ENCODE measurements at regions of chr13 and their contacts with region 1.

Region 1: DNA sequence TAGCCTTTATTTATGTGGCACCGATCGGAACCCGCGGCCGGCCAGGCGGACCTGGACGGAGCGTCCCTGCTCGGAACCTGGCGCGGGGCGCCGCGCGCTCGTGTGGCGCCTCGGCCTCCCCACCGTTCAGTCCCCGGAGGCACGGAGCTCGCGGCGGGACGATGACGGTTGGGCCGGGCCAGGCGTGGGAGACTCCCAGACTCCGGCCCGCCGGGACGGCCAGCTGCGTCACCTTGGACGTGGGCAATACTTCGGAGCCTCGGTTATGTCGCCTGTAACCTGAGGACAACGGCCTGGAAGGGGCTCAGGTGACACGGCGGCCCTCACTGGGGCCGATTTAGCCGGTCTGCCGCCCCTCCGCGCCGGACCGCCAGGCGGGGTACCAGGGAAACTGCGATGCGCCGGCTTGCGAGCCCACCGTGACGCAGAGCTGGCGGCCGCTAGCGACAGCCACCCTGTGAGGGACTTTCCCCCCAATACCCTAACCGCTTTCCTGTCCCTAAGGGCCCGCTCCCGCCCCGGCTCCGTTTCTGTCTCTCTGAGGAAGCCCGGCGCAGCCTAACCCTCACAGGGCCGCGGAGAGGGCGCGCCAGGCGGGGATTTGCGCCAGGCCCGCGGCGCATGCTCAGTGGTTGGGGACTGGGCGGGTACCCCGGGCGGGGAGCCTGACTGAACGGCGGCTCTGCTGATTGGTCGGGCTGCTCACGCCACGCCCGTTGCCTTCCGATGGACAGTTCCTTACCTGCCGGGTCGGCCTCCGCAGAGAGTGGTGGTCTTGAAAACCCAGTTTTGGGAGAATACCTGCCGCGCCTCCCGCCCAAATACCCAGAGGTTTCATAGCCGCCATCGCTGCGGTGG is 109.5 kb upstream of the DOCK9 start:
- DNase-seq: peak; percentile 96
- ATAC-seq: peak; percentile 86
- H3K4me3 Mint-ChIP-seq: peak overlapping the region; percentile 94
- H3K27ac Mint-ChIP-seq: peak overlapping the region; percentile 94
- H3K4me1 Mint-ChIP-seq: peaks cover 34% of the 10 kb centered on the region
- H3K27me3 Mint-ChIP-seq: no peaks in the 10 kb centered on the region

Region 2: GRCh38 chr13:99045396-99045795 is 41.9 kb before region 1 on chr13:
- POLR2A ChIA-PET with region 1: interaction called, 36 read pairs
- DNase-seq: no peak
- ATAC-seq: no peak
- H3K4me3 Mint-ChIP-seq: peak overlapping the region; percentile 66
- H3K27ac Mint-ChIP-seq: peak overlapping the region; percentile 92
- H3K4me1 Mint-ChIP-seq: peaks cover 73% of the 10 kb centered on the region
- H3K27me3 Mint-ChIP-seq: no peaks in the 10 kb centered on the region

Region 3: GRCh38 chr13:99053636-99054233 is 33.6 kb before region 1 on chr13:
- POLR2A ChIA-PET with region 1: interaction called, 36 read pairs
- DNase-seq: no peak
- ATAC-seq: peak; percentile 52
- H3K4me3 Mint-ChIP-seq: peak overlapping the region; percentile 80
- H3K27ac Mint-ChIP-seq: peak overlapping the region; percentile 91
- H3K4me1 Mint-ChIP-seq: peaks cover 63% of the 10 kb centered on the region
- H3K27me3 Mint-ChIP-seq: no peaks in the 10 kb centered on the region

Region 4: GRCh38 chr13:99075268-99076191 is 11.8 kb before region 1 on chr13:
- POLR2A ChIA-PET with region 1: interaction called, 16 read pairs
- DNase-seq: no peak
- ATAC-seq: peak; percentile 90
- H3K4me3 Mint-ChIP-seq: peak overlapping the region; percentile 71
- H3K27ac Mint-ChIP-seq: peak overlapping the region; percentile 97
- H3K4me1 Mint-ChIP-seq: peaks cover 59% of the 10 kb centered on the region
- H3K27me3 Mint-ChIP-seq: no peaks in the 10 kb centered on the region